Activated T-helper 1 cell treated with anti-CD3 and anti-CD28 coated beads, Interleukin-12 subunit alpha, Interleukin-12 subunit beta, Interleukin-2, Interleukin-4 antibody, amounts not matched to agents 30 ng/mL and 10 ng/mL and 1 ng/mL, durations not matched to agents 14 hours and 24 hours and 36 hours (primary cell): ENCODE measurements at regions of chr1 and their contacts with region 1.

Region 1: GRCh38 chr1:172818841-172819527 is 160.1 kb downstream of the FASLG start:
- DNase-seq: peak; percentile 37
- H3K4me3 Mint-ChIP-seq: peak overlapping the region; percentile 59
- H3K27ac Mint-ChIP-seq: peak overlapping the region; percentile 78
- H3K4me1 Mint-ChIP-seq: peaks cover 47% of the 10 kb centered on the region
- H3K27me3 Mint-ChIP-seq: peaks cover 5% of the 10 kb centered on the region

Region 2: DNA sequence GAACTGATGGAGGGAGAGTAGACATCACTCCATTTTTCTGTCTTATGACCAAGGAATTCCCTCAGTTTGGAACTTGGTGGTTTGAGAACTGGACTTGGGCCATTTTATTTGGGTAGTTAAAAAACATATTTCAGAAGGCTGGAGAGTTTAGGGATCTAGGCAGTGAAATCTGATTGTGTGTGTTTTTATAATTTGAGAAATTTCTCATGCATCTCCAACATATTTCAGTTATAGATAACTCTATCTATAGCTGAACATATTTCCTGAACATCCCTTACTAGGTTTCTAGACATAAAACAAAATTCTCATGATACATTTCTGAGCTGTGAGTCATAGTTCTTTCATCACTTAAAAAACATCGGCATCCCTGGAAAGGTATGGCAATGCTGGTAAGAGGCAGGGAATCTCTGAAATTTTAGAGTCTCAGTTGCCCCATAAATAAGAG is 57.4 kb before region 1 on chr1:
- intact Hi-C with region 1: loop called (anchors 1 kb)
- DNase-seq: no peak
- H3K4me3 Mint-ChIP-seq: no peak overlapping the region
- H3K27ac Mint-ChIP-seq: no peak overlapping the region
- H3K4me1 Mint-ChIP-seq: peaks cover 42% of the 10 kb centered on the region
- H3K27me3 Mint-ChIP-seq: peaks cover 6% of the 10 kb centered on the region

Region 3: GRCh38 chr1:172837816-172838680 is 19.1 kb after region 1 on chr1:
- intact Hi-C with region 1: loop called (anchors 1 kb)
- DNase-seq: peak; percentile 29
- H3K4me3 Mint-ChIP-seq: no peak overlapping the region
- H3K27ac Mint-ChIP-seq: peak overlapping the region; percentile 26
- H3K4me1 Mint-ChIP-seq: peaks cover 46% of the 10 kb centered on the region
- H3K27me3 Mint-ChIP-seq: peaks cover 65% of the 10 kb centered on the region

Region 4: GRCh38 chr1:172870901-172871606 is 52.1 kb after region 1 on chr1:
- intact Hi-C with region 1: loop called (anchors 1 kb)
- DNase-seq: no peak
- H3K4me3 Mint-ChIP-seq: no peak overlapping the region
- H3K27ac Mint-ChIP-seq: no peak overlapping the region
- H3K4me1 Mint-ChIP-seq: peaks cover 32% of the 10 kb centered on the region
- H3K27me3 Mint-ChIP-seq: peaks cover 39% of the 10 kb centered on the region

Region 5: GRCh38 chr1:173043253-173043652 is 224.3 kb after region 1 on chr1:
- intact Hi-C with region 1: loop called (anchors 5 kb)
- DNase-seq: no peak
- H3K4me3 Mint-ChIP-seq: no peak overlapping the region
- H3K27ac Mint-ChIP-seq: no peak overlapping the region
- H3K4me1 Mint-ChIP-seq: peaks cover 20% of the 10 kb centered on the region
- H3K27me3 Mint-ChIP-seq: peaks cover 2% of the 10 kb centered on the region